Naive thymus-derived CD4-positive, alpha-beta T cell (primary cell): ENCODE measurements at regions of chr10 and their contacts with region 1.

Region 1: GRCh38 chr10:101529207-101529606 is 58.9 kb downstream of the POLL start:
- DNase-seq: no peak
- ATAC-seq: no peak
- H3K4me3 ChIP-seq: no peak overlapping the region
- H3K4me3 Mint-ChIP-seq: no peak overlapping the region
- H3K27ac ChIP-seq: no peak overlapping the region
- H3K27ac Mint-ChIP-seq: no peak overlapping the region
- H3K4me1 ChIP-seq: no peaks in the 10 kb centered on the region
- H3K4me1 Mint-ChIP-seq: no peaks in the 10 kb centered on the region
- H3K27me3 ChIP-seq: no peaks in the 10 kb centered on the region
- H3K27me3 Mint-ChIP-seq: no peaks in the 10 kb centered on the region

Region 2: DNA sequence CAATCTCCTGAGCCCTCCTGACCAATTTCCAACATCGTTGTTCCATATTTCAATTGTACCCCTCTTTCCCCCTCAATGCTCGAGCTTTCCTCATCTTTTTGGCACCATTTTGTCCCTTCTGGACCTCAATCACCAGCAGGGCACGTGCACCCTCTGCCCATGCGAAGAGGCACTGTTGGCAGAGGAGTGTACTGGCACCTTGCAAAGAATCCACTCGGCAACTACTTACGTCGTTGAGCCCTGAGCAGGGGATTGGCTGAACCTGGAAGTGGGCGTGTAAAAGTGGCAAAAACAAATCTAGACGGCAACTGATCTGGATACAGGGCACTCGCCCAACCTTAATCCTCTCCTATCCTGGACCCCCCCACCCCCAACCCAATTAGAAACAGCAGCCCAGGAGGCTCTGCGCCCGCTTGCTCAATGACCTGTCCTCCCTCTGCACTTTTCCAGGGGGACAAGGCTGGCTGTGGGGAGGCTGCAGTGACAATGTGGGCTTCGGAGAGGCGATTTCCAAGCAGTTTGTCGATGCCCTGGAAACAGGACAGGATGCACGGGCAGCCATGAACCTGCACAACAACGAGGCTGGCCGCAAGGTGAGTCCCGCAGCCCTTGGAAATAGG is 1047.6 kb before region 1 on chr10:
- CTCF ChIA-PET with region 1: no interaction called
- POLR2A ChIA-PET with region 1: no interaction called
- intact Hi-C with region 1: no loop called
- DNase-seq: peak; percentile 86 to 97 (median 90)
- ATAC-seq: peak; percentile 98
- H3K4me3 ChIP-seq: peak overlapping the region; percentile 70
- H3K4me3 Mint-ChIP-seq: peak overlapping the region; percentile 63 to 92 (median 86)
- H3K27ac ChIP-seq: no peak overlapping the region
- H3K27ac Mint-ChIP-seq: peak overlapping the region in 5 of 9 donors; percentile 1 to 76 (median 66)
- H3K4me1 ChIP-seq: peaks cover 0 to 4% of the 10 kb centered on the region in 2 donors
- H3K4me1 Mint-ChIP-seq: peaks cover 10 to 35% (median 12%) of the 10 kb centered on the region in 7 donors
- H3K27me3 ChIP-seq: no peaks in the 10 kb centered on the region
- H3K27me3 Mint-ChIP-seq: peaks cover 4 to 31% (median 26%) of the 10 kb centered on the region in 5 donors

Region 3: GRCh38 chr10:101493782-101494281 is 35.4 kb before region 1 on chr10:
- CTCF ChIA-PET with region 1: no interaction called
- POLR2A ChIA-PET with region 1: no interaction called
- intact Hi-C with region 1: no loop called
- DNase-seq: no peak
- ATAC-seq: no peak
- H3K4me3 ChIP-seq: no peak overlapping the region
- H3K4me3 Mint-ChIP-seq: no peak overlapping the region
- H3K27ac ChIP-seq: no peak overlapping the region
- H3K27ac Mint-ChIP-seq: no peak overlapping the region
- H3K4me1 ChIP-seq: no peaks in the 10 kb centered on the region
- H3K4me1 Mint-ChIP-seq: peaks cover 1 to 12% (median 5%) of the 10 kb centered on the region in 7 donors
- H3K27me3 ChIP-seq: no peaks in the 10 kb centered on the region
- H3K27me3 Mint-ChIP-seq: peaks cover 0 to 1% (median 0%) of the 10 kb centered on the region in 5 donors

Region 4: GRCh38 chr10:101504438-101504837 is 24.8 kb before region 1 on chr10:
- CTCF ChIA-PET with region 1: interaction called, 11 read pairs
- POLR2A ChIA-PET with region 1: no interaction called
- intact Hi-C with region 1: no loop called
- DNase-seq: no peak
- ATAC-seq: no peak
- H3K4me3 ChIP-seq: no peak overlapping the region
- H3K4me3 Mint-ChIP-seq: no peak overlapping the region
- H3K27ac ChIP-seq: no peak overlapping the region
- H3K27ac Mint-ChIP-seq: no peak overlapping the region
- H3K4me1 ChIP-seq: no peaks in the 10 kb centered on the region
- H3K4me1 Mint-ChIP-seq: peaks cover 0 to 10% (median 0%) of the 10 kb centered on the region in 7 donors
- H3K27me3 ChIP-seq: no peaks in the 10 kb centered on the region
- H3K27me3 Mint-ChIP-seq: peaks cover 0 to 9% (median 0%) of the 10 kb centered on the region in 5 donors

Region 5: DNA sequence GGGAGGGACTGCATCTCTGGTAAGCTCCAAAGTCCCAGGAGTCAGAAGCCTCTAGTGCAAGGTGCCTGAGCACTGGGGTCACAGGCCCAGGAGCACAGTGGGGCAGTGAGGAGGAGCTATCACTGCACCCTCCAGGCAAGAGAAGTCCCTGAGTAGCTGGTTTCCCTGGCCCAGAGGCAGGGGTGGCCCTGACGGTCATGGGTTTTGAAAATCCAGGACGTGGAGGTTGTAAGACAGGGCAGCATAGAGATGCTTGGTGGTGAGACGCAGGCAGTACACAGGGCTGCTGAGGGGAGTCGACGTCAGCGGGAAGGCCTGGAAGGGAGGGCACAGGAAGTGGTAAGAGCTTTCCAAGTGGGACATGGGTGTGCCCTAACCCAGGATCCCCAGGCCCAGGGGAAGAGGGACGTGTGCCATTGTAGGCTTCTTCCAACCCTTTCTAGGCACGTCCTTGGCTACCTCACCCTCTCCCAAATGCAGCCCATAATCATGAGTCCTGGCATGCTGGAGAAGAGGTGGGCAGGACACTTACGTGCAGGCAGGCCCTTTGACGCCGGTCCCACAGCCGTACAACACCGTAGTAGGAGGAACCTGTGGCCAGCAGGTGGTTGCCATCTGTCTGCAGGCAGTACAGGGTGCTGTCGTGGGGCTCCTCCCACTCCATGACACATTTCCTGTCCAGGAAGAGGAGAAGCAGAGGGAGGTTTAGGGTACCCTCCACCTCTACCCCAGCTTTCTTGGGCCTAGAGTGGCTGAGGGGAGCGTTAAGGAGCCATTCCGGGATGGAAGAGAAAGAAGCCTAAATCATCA is 82.1 kb after region 1 on chr10:
- CTCF ChIA-PET with region 1: no interaction called
- POLR2A ChIA-PET with region 1: no interaction called
- intact Hi-C with region 1: no loop called
- DNase-seq: no peak
- ATAC-seq: peak; percentile 36
- H3K4me3 ChIP-seq: no peak overlapping the region
- H3K4me3 Mint-ChIP-seq: no peak overlapping the region
- H3K27ac ChIP-seq: no peak overlapping the region
- H3K27ac Mint-ChIP-seq: peak overlapping the region in 8 of 9 donors; percentile 3 to 68 (median 64)
- H3K4me1 ChIP-seq: no peaks in the 10 kb centered on the region
- H3K4me1 Mint-ChIP-seq: peaks cover 0 to 8% (median 0%) of the 10 kb centered on the region in 7 donors
- H3K27me3 ChIP-seq: no peaks in the 10 kb centered on the region
- H3K27me3 Mint-ChIP-seq: no peaks in the 10 kb centered on the region